ENCODE measurements at regions of chr5 and their contacts with region 1.

Region 1: GRCh38 chr5:40736103-40736875 is 19.5 kb downstream of the TTC33 start:
- DNase-seq: peak in 7 of 9 donors; percentile 26 to 60 (median 52)
- ATAC-seq: peak; percentile 81
- H3K4me3 ChIP-seq: no peak overlapping the region
- H3K4me3 Mint-ChIP-seq: no peak overlapping the region
- H3K27ac ChIP-seq: no peak overlapping the region
- H3K27ac Mint-ChIP-seq: no peak overlapping the region
- H3K4me1 ChIP-seq: no peaks in the 10 kb centered on the region
- H3K4me1 Mint-ChIP-seq: peaks cover 18 to 33% (median 24%) of the 10 kb centered on the region in 7 donors
- H3K27me3 ChIP-seq: no peaks in the 10 kb centered on the region
- H3K27me3 Mint-ChIP-seq: no peaks in the 10 kb centered on the region

Region 2: DNA sequence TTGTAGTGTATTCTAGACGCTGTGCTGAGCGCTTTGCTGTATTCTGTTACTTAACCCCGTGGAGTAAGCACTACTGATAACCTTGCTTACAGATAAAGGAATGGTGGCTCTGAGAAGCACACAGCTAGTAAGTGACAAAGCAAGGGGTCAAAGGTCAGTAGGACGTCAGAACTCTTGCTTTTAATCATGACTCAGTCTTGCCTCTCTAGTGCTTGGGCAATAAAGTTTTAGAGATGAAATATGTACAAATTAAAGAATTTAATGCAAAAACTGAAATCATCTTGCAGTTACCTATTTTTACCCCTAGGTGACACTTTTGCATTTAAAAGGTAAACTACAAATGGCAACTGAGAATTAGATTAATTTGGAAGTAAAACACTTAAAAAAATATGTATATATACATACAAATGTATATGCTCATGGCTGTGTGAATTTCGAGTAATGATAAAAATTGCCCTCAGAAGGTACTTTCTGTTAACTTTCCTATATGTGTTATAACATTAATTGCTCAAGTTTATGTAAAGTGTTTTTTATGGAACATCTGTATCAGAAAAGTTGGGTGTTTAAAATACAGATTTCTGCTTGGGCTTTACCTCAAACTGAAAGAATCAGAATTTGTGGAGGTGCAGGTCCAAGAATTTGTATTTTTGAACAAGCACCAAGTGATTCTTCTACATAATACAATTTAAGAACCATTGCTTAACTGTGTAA is 1136.4 kb before region 1 on chr5:
- CTCF ChIA-PET with region 1: no interaction called
- POLR2A ChIA-PET with region 1: no interaction called
- intact Hi-C with region 1: loop called (anchors 1 to 5 kb)
- DNase-seq: no peak
- ATAC-seq: no peak
- H3K4me3 ChIP-seq: no peak overlapping the region
- H3K4me3 Mint-ChIP-seq: no peak overlapping the region
- H3K27ac ChIP-seq: no peak overlapping the region
- H3K27ac Mint-ChIP-seq: no peak overlapping the region
- H3K4me1 ChIP-seq: no peaks in the 10 kb centered on the region
- H3K4me1 Mint-ChIP-seq: no peaks in the 10 kb centered on the region
- H3K27me3 ChIP-seq: peaks cover 0 to 3% of the 10 kb centered on the region in 2 donors
- H3K27me3 Mint-ChIP-seq: peaks cover 6 to 36% (median 19%) of the 10 kb centered on the region in 5 donors

Region 3: DNA sequence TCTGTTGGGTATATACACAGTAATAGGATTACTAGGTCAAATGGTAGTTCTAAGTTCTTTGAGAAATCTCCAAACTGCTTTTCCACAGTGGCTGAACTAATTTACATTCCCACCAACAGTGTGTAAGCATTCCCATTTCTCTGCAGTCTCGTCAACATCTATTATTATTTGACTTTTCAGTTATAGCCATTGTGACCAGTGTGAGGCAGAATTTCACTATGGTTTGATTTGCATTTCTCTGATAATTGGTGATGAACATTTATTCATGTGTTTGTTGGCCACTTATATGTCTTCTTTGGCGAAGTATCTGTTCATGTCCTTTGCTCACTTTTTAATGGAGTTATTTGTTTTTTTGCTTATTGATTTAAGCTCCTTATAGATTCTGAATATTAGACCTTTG is 715.3 kb before region 1 on chr5:
- CTCF ChIA-PET with region 1: no interaction called
- POLR2A ChIA-PET with region 1: no interaction called
- intact Hi-C with region 1: loop called (anchors 2 to 10 kb)
- DNase-seq: no peak
- ATAC-seq: no peak
- H3K4me3 ChIP-seq: no peak overlapping the region
- H3K4me3 Mint-ChIP-seq: no peak overlapping the region
- H3K27ac ChIP-seq: no peak overlapping the region
- H3K27ac Mint-ChIP-seq: no peak overlapping the region
- H3K4me1 ChIP-seq: no peaks in the 10 kb centered on the region
- H3K4me1 Mint-ChIP-seq: peaks cover 0 to 4% (median 0%) of the 10 kb centered on the region in 7 donors
- H3K27me3 ChIP-seq: no peaks in the 10 kb centered on the region
- H3K27me3 Mint-ChIP-seq: peaks cover 0 to 11% (median 4%) of the 10 kb centered on the region in 5 donors

Region 4: GRCh38 chr5:40367255-40367654 is 369.0 kb before region 1 on chr5:
- CTCF ChIA-PET with region 1: no interaction called
- POLR2A ChIA-PET with region 1: no interaction called
- intact Hi-C with region 1: loop called in 1 of 2 experiments (anchors 1 kb)
- DNase-seq: peak in 7 of 9 donors; percentile 18 to 53 (median 38)
- ATAC-seq: peak; percentile 54
- H3K4me3 ChIP-seq: no peak overlapping the region
- H3K4me3 Mint-ChIP-seq: no peak overlapping the region
- H3K27ac ChIP-seq: no peak overlapping the region
- H3K27ac Mint-ChIP-seq: peak overlapping the region in 6 of 9 donors; percentile 19 to 86 (median 66)
- H3K4me1 ChIP-seq: peaks cover 0 to under 1% of the 10 kb centered on the region in 2 donors
- H3K4me1 Mint-ChIP-seq: peaks cover 0 to 17% (median 8%) of the 10 kb centered on the region in 7 donors
- H3K27me3 ChIP-seq: no peaks in the 10 kb centered on the region
- H3K27me3 Mint-ChIP-seq: no peaks in the 10 kb centered on the region

Region 5: DNA sequence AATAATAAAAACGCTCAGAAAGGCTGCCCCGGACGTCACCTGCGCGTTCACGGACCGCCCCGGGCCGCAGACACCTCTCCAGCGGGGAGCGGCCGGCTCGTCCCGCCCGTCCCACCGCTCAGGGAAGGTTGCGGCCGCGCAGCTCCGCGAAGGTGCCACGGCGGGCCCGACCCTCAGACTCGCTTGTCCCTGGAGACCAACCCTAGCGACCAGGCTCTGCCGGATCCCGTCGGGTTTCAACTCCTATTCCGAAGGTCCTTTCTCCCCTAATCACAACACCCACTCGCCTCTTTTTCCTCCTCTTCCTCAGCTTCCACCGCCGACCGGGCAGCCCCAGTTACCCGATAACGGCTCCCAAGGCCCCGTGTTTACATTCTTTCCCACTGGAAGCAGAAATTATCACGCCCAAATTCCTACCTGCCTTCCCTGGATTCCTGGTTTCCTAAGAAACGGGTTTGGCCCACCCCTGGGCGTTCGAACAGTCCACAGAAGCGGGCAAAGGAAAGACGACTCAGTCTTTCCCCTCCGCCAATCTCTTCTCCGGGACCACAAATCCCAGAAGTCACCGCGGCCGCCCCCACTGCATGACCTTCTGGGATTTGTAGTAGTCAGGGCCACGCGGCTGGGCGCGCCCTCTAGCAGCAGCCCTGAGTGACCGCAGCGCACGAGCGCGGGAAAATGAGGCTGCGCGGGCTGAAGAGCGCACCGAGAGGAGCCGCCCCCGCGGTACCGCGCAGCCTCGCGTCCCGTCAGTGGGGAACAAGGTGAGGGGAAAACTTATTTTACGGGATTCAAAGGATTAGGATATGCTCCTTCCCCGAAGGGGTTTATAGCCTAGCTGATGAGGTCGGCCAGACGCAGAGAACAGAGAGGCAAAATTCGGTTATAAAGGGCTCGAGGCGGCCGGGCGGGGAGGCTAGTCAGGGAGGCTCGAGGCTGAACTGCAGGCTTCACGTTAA is 19.4 kb after region 1 on chr5 and contains the start of gene TTC33:
- CTCF ChIA-PET with region 1: no interaction called
- POLR2A ChIA-PET with region 1: interaction called, 3 read pairs
- intact Hi-C with region 1: loop called in 1 of 2 experiments (anchors 2 kb)
- DNase-seq: peak; percentile 84 to 95 (median 91)
- ATAC-seq: peak; percentile 95
- H3K4me3 ChIP-seq: peak within 1 kb of the TSS; percentile 95
- H3K4me3 Mint-ChIP-seq: no peak within 1 kb of the TSS
- H3K27ac ChIP-seq: peak within 1 kb of the TSS; percentile 89
- H3K27ac Mint-ChIP-seq: peak within 1 kb of the TSS in 1 of 9 donors; percentile 32
- H3K4me1 ChIP-seq: peaks cover 9 to 11% of the 10 kb centered on the region in 2 donors
- H3K4me1 Mint-ChIP-seq: peaks cover 0 to 34% (median 17%) of the 10 kb centered on the region in 7 donors
- H3K27me3 ChIP-seq: no peaks in the 10 kb centered on the region
- H3K27me3 Mint-ChIP-seq: no peaks in the 10 kb centered on the region
- total RNA-seq, gene TTC33: 7.0 to 17.2 (median 14.0) TPM

Region 6: GRCh38 chr5:40774623-40775022 is 38.3 kb after region 1 on chr5:
- CTCF ChIA-PET with region 1: no interaction called
- POLR2A ChIA-PET with region 1: no interaction called
- intact Hi-C with region 1: no loop called
- DNase-seq: no peak
- ATAC-seq: no peak
- H3K4me3 ChIP-seq: no peak overlapping the region
- H3K4me3 Mint-ChIP-seq: no peak overlapping the region
- H3K27ac ChIP-seq: no peak overlapping the region
- H3K27ac Mint-ChIP-seq: no peak overlapping the region
- H3K4me1 ChIP-seq: no peaks in the 10 kb centered on the region
- H3K4me1 Mint-ChIP-seq: peaks cover 7 to 12% (median 9%) of the 10 kb centered on the region in 7 donors
- H3K27me3 ChIP-seq: no peaks in the 10 kb centered on the region
- H3K27me3 Mint-ChIP-seq: no peaks in the 10 kb centered on the region

Region 7: GRCh38 chr5:41115281-41115680 is 379.0 kb after region 1 on chr5:
- CTCF ChIA-PET with region 1: no interaction called
- POLR2A ChIA-PET with region 1: no interaction called
- intact Hi-C with region 1: no loop called
- DNase-seq: no peak
- ATAC-seq: no peak
- H3K4me3 ChIP-seq: no peak overlapping the region
- H3K4me3 Mint-ChIP-seq: no peak overlapping the region
- H3K27ac ChIP-seq: no peak overlapping the region
- H3K27ac Mint-ChIP-seq: no peak overlapping the region
- H3K4me1 ChIP-seq: no peaks in the 10 kb centered on the region
- H3K4me1 Mint-ChIP-seq: no peaks in the 10 kb centered on the region
- H3K27me3 ChIP-seq: no peaks in the 10 kb centered on the region
- H3K27me3 Mint-ChIP-seq: no peaks in the 10 kb centered on the region

Measured in naive thymus-derived CD4-positive, alpha-beta T cell (primary cell).